ENCODE measurements at regions of chr17 and their contacts with region 1.

Region 1: DNA sequence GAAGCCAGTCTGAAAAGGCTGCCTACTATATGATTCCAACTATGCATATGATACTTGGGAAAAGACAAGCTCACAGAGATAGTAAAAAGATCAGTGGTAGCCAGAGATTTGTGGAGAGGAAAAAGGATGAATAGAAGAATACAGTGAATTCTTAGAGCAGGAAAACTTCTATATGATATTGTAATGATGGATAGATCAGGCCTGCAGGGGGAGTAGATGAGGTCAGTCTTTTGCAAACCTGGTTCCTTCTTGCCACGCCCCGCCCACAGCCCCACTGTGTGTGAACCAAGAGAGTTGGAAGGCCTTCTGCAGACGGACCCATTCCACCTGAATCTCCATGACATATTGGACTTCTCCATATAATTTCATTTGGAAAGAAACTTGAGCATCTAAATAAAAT is 761 bp upstream of the CCL8 start:
- DNase-seq: no peak
- H3K4me3 ChIP-seq: no peak overlapping the region
- H3K27ac ChIP-seq: no peak overlapping the region
- H3K4me1 ChIP-seq: no peaks in the 10 kb centered on the region
- H3K27me3 ChIP-seq: no peaks in the 10 kb centered on the region
- CTCF ChIP-seq: no peak

Region 2: GRCh38 chr17:33486135-33486885 is 832.2 kb before region 1 on chr17:
- CTCF ChIA-PET with region 1: no interaction called
- dilution Hi-C with region 1: loop called (anchors 10 kb)
- in situ Hi-C with region 1: no loop called
- intact Hi-C with region 1: no loop called
- DNase-seq: no peak
- H3K4me3 ChIP-seq: no peak overlapping the region
- H3K27ac ChIP-seq: no peak overlapping the region
- H3K4me1 ChIP-seq: no peaks in the 10 kb centered on the region
- H3K27me3 ChIP-seq: no peaks in the 10 kb centered on the region
- CTCF ChIP-seq: no peak

Region 3: DNA sequence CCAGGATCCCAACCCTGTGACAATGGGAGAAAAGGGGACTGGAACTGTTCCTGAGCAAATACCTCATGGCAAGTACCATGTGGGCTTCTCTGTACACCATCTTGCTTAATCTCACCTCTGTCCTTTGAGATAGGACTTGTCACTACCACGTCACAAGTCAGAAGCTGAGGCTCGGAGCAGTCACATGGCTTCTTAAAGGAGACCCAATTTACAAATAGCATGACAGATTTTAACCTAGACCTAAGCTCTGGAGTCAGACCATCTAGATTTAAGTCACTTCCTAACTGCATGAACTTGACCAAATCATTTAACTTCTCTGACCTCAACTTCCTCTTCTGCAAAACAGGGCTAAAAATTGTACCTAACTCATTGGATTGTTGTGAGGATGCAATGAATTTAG is 80.5 kb after region 1 on chr17:
- CTCF ChIA-PET with region 1: no interaction called
- dilution Hi-C with region 1: no loop called
- in situ Hi-C with region 1: loop called in 1 of 2 experiments (anchors 10 kb)
- intact Hi-C with region 1: no loop called
- DNase-seq: no peak
- H3K4me3 ChIP-seq: no peak overlapping the region
- H3K27ac ChIP-seq: no peak overlapping the region
- H3K4me1 ChIP-seq: no peaks in the 10 kb centered on the region
- H3K27me3 ChIP-seq: no peaks in the 10 kb centered on the region
- CTCF ChIP-seq: no peak

Measured in mammary epithelial cell (primary cell).